ENCODE measurements at regions of chr5 and their contacts with region 1.

Region 1: GRCh38 chr5:164358531-164359259 is 853.3 kb downstream of the MAT2B start:
- DNase-seq: no peak
- ATAC-seq: no peak
- H3K4me3 ChIP-seq: no peak overlapping the region
- H3K27ac ChIP-seq: no peak overlapping the region
- H3K4me1 ChIP-seq: no peaks in the 10 kb centered on the region
- H3K27me3 ChIP-seq: no peaks in the 10 kb centered on the region
- CTCF ChIP-seq: no peak

Region 2: DNA sequence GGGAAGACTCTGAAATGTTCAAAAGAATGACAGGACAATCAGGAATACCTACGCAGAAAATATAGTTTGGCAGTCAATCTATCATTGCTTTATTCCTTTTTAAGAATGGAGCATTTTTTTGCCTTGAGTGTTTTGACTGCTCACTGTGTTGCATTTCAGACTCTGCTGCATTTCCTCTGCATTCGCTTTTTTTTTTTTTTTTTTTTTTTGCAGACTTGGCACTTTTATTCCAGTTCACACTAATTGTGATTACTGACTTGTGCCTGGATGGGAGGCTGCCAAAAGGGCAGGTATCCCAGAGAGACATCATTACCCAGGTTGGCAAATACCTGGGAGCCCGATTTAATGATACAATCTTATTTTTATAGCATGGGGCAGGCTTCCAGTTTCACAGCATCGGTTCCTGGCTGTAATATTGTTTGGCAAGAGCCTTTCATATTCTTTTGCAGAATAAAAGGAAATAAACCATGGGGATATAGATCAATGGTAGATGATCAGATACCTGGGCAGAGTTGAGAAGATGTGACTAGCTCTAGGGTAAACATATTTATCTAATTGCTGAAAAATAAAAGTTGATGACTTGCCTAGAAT is 279.3 kb after region 1 on chr5:
- intact Hi-C with region 1: no loop called
- DNase-seq: no peak
- ATAC-seq: no peak
- H3K4me3 ChIP-seq: no peak overlapping the region
- H3K27ac ChIP-seq: no peak overlapping the region
- H3K4me1 ChIP-seq: no peaks in the 10 kb centered on the region
- H3K27me3 ChIP-seq: no peaks in the 10 kb centered on the region
- CTCF ChIP-seq: no peak

Region 3: GRCh38 chr5:165906871-165907270 is 1548.2 kb after region 1 on chr5:
- intact Hi-C with region 1: loop called in 1 of 10 experiments (anchors 5 kb)
- DNase-seq: no peak
- ATAC-seq: no peak
- H3K4me3 ChIP-seq: no peak overlapping the region
- H3K27ac ChIP-seq: no peak overlapping the region
- H3K4me1 ChIP-seq: no peaks in the 10 kb centered on the region
- H3K27me3 ChIP-seq: no peaks in the 10 kb centered on the region
- CTCF ChIP-seq: no peak

Measured in heart right ventricle (tissue), 16 donors.